Calu3 (cell line): ENCODE measurements at regions of chr5 and their contacts with region 1.

Region 1: GRCh38 chr5:132386644-132387286 is 17.3 kb downstream of the SLC22A5 start:
- DNase-seq: peak; percentile 81
- H3K4me3 Mint-ChIP-seq: no peak overlapping the region
- H3K27ac Mint-ChIP-seq: peak overlapping the region; percentile 87
- H3K4me1 Mint-ChIP-seq: peaks cover 59% of the 10 kb centered on the region
- H3K27me3 Mint-ChIP-seq: no peaks in the 10 kb centered on the region
- CTCF ChIP-seq: peak; percentile 90

Region 2: GRCh38 chr5:131671994-131672655 is 714.6 kb before region 1 on chr5:
- CTCF ChIA-PET with region 1: no interaction called
- intact Hi-C with region 1: no loop called
- DNase-seq: no peak
- H3K4me3 Mint-ChIP-seq: no peak overlapping the region
- H3K27ac Mint-ChIP-seq: no peak overlapping the region
- H3K4me1 Mint-ChIP-seq: peaks cover 5% of the 10 kb centered on the region
- H3K27me3 Mint-ChIP-seq: no peaks in the 10 kb centered on the region
- CTCF ChIP-seq: no peak

Region 3: GRCh38 chr5:132205385-132206125 is 181.2 kb before region 1 on chr5:
- CTCF ChIA-PET with region 1: no interaction called
- intact Hi-C with region 1: no loop called
- DNase-seq: no peak
- H3K4me3 Mint-ChIP-seq: no peak overlapping the region
- H3K27ac Mint-ChIP-seq: no peak overlapping the region
- H3K4me1 Mint-ChIP-seq: no peaks in the 10 kb centered on the region
- H3K27me3 Mint-ChIP-seq: no peaks in the 10 kb centered on the region
- CTCF ChIP-seq: no peak

Region 4: GRCh38 chr5:132426525-132427138 is 39.9 kb after region 1 on chr5:
- CTCF ChIA-PET with region 1: interaction called, 4 read pairs
- intact Hi-C with region 1: loop called (anchors 5 kb)
- DNase-seq: peak; percentile 75
- H3K4me3 Mint-ChIP-seq: no peak overlapping the region
- H3K27ac Mint-ChIP-seq: no peak overlapping the region
- H3K4me1 Mint-ChIP-seq: peaks cover 65% of the 10 kb centered on the region
- H3K27me3 Mint-ChIP-seq: no peaks in the 10 kb centered on the region
- CTCF ChIP-seq: peak; percentile 28

Region 5: GRCh38 chr5:132495667-132496190 is 109.0 kb after region 1 on chr5:
- CTCF ChIA-PET with region 1: interaction called, 83 read pairs
- intact Hi-C with region 1: no loop called
- DNase-seq: peak; percentile 79
- H3K4me3 Mint-ChIP-seq: peak overlapping the region; percentile 86
- H3K27ac Mint-ChIP-seq: peak overlapping the region; percentile 32
- H3K4me1 Mint-ChIP-seq: peaks cover 66% of the 10 kb centered on the region
- H3K27me3 Mint-ChIP-seq: no peaks in the 10 kb centered on the region
- CTCF ChIP-seq: no peak

Region 6: GRCh38 chr5:132526290-132526973 is 139.7 kb after region 1 on chr5:
- CTCF ChIA-PET with region 1: no interaction called
- intact Hi-C with region 1: no loop called
- DNase-seq: peak; percentile 83
- H3K4me3 Mint-ChIP-seq: peak overlapping the region; percentile 42
- H3K27ac Mint-ChIP-seq: peak overlapping the region; percentile 12
- H3K4me1 Mint-ChIP-seq: peaks cover 11% of the 10 kb centered on the region
- H3K27me3 Mint-ChIP-seq: peaks cover 40% of the 10 kb centered on the region
- CTCF ChIP-seq: peak; percentile 95

Region 7: GRCh38 chr5:132607095-132607494 is 220.3 kb after region 1 on chr5:
- CTCF ChIA-PET with region 1: no interaction called
- intact Hi-C with region 1: no loop called
- DNase-seq: no peak
- H3K4me3 Mint-ChIP-seq: no peak overlapping the region
- H3K27ac Mint-ChIP-seq: no peak overlapping the region
- H3K4me1 Mint-ChIP-seq: no peaks in the 10 kb centered on the region
- H3K27me3 Mint-ChIP-seq: no peaks in the 10 kb centered on the region
- CTCF ChIP-seq: no peak

Region 8: GRCh38 chr5:132714456-132715307 is 327.9 kb after region 1 on chr5:
- CTCF ChIA-PET with region 1: interaction called, 3 read pairs
- intact Hi-C with region 1: loop called (anchors 10 kb)
- DNase-seq: no peak
- H3K4me3 Mint-ChIP-seq: no peak overlapping the region
- H3K27ac Mint-ChIP-seq: no peak overlapping the region
- H3K4me1 Mint-ChIP-seq: no peaks in the 10 kb centered on the region
- H3K27me3 Mint-ChIP-seq: no peaks in the 10 kb centered on the region
- CTCF ChIP-seq: peak; percentile 30

Region 9: GRCh38 chr5:132820162-132820754 is 433.5 kb after region 1 on chr5:
- CTCF ChIA-PET with region 1: interaction called, 3 read pairs
- intact Hi-C with region 1: loop called (anchors 1 kb)
- DNase-seq: peak; percentile 94
- H3K4me3 Mint-ChIP-seq: no peak overlapping the region
- H3K27ac Mint-ChIP-seq: no peak overlapping the region
- H3K4me1 Mint-ChIP-seq: peaks cover 9% of the 10 kb centered on the region
- H3K27me3 Mint-ChIP-seq: no peaks in the 10 kb centered on the region
- CTCF ChIP-seq: peak; percentile 91